ENCODE measurements at regions of chr1 and their contacts with region 1.

Region 1: DNA sequence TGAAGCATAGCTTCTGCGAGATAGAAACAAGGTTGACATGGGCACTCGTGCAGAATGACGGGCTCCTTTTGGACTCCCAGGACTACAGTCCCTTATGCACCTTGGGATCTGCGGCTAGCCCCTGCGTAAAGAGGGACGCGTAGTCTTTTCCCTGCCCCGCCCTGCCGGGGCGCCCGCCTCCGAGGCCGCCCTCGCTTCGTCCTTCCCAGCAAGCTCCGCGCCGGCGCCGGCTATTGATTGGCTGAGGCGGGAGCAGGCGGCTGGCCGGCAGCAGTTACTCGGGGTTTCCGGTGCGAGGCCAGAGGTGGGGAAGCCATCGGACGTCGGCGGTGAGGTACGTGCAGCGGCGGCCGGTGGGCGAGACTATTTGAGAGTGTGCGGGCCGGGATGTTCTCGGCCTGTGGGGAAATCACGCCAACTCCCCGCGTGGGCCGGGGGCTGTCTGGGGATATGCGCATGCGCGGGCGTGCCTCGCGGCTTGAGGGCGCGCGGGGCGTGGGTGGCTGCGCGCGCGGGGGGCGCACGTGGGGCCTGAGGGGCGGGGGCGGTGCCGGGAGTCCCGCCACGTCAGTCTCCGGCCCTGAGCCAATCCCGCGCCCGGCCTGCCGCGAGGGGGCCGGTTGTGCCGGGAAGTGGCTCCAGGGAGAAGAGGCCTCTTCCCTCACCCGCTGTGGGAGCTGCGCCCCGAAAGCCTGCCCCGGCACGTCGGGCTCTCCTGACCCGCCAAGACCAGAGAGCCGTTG is at the start of gene TXLNA:
- DNase-seq: peak; percentile 87 to 98
- H3K4me3 ChIP-seq: peak within 1 kb of the TSS; percentile 73 to 79
- H3K27ac ChIP-seq: peak within 1 kb of the TSS; percentile 94
- H3K4me1 ChIP-seq: peaks cover 19 to 29% of the 10 kb centered on the region in 2 donors
- H3K27me3 ChIP-seq: no peaks in the 10 kb centered on the region
- CTCF ChIP-seq: peak in 1 of 3 experiments; percentile 36
- total RNA-seq, gene TXLNA: 83.8 TPM

Region 2: DNA sequence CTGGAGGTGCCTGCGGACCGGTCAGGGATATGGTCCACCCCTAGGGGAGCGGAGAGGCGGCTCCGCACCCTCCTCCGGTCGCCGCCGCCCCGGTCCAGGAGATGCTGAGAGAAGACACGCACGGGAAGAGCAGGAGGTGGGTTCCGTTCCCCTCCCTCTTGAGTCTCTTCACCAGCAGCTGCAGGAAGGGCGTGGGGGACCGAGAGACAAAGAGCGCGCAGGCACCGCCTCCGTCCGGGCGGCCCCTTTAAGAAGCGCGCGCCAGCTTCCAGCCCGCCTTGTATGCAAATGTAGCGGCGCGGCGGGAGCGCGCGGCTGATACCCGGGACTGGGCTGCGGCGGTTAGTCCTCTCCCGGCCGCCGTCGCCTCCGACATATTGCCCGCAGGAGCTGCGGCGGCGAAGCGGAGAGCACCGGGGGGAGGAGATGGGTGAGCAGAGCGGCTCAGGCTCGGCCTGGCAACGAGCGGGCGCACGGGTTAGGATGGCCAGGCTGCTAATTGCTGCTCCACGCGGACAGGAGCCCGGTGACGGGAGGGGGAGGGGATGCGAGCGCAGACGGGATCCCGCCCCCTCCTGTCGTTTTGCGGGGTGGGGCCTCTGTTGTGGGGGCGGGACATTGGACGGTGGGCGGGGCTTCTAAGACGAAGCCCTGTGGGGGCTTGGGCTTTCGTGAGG is 106.9 kb before region 1 on chr1 and contains the start of gene TMEM39B:
- intact Hi-C with region 1: loop called (anchors 5 kb)
- DNase-seq: peak; percentile 84 to 98
- H3K4me3 ChIP-seq: peak within 1 kb of the TSS; percentile 75
- H3K27ac ChIP-seq: peak within 1 kb of the TSS; percentile 83 to 89
- H3K4me1 ChIP-seq: peaks cover 13 to 15% of the 10 kb centered on the region in 2 donors
- H3K27me3 ChIP-seq: no peaks in the 10 kb centered on the region
- CTCF ChIP-seq: peak in 2 of 3 experiments; percentile 13 to 22
- total RNA-seq, gene TMEM39B: 2.6 TPM

Region 3: DNA sequence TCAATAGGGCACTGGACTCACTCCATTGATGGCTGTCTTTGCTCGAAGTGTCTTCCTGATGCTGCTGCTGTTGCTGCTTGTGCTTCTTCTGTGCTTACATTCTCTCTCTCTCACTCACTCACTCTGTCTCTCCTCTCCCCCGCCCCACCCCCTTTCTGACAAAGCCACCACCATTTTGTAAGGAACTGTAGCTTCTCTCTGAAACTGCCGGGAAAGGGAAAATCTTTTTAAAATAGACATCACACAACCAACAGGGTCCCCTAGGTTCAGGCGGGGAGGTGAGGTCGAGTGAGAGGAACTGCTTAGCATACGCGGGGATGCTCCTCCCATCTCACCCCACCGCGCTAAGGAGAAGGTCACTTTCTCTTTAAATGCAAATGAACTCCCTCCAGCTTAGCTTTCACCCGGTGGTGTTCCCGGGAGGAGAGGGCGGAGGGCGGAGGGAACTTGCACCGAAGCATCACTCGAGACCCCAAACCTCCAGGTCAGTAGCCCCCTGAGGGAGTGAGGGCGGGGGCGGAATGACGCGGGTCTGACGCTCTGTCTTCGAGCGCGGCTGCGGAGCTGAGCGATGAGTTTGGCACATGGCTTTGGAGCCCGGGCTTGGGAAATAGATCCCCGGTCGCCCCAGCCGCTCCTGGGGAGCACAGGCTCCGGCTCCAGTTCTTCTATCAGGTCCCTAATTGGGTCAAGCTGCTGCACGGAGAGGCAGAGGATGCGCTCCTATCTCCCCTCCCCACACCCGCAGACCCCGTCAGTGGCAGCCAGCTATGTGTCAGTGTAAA is 20.8 kb after region 1 on chr1 and contains the start of gene CCDC28B:
- intact Hi-C with region 1: loop called (anchors 1 kb)
- DNase-seq: peak in 1 of 2 donors; percentile 82
- H3K4me3 ChIP-seq: peak within 1 kb of the TSS; percentile 73 to 74
- H3K27ac ChIP-seq: peak within 1 kb of the TSS; percentile 66 to 68
- H3K4me1 ChIP-seq: peaks cover 7 to 21% of the 10 kb centered on the region in 2 donors
- H3K27me3 ChIP-seq: no peaks in the 10 kb centered on the region
- CTCF ChIP-seq: no peak
- total RNA-seq, gene CCDC28B: 29.1 TPM

Region 4: GRCh38 chr1:32240140-32240951 is 60.7 kb after region 1 on chr1:
- intact Hi-C with region 1: loop called (anchors 2 kb)
- DNase-seq: peak; percentile 51 to 92
- H3K4me3 ChIP-seq: peak overlapping the region; percentile 69 to 78
- H3K27ac ChIP-seq: peak overlapping the region; percentile 87 to 89
- H3K4me1 ChIP-seq: peaks cover 0 to 8% of the 10 kb centered on the region in 2 donors
- H3K27me3 ChIP-seq: no peaks in the 10 kb centered on the region
- CTCF ChIP-seq: peak in 2 of 3 experiments; percentile 30 to 35

Measured in ascending aorta (tissue), 2 donors.